CD4-positive, alpha-beta T cell (primary cell): ENCODE measurements at regions of chr12 and their contacts with region 1.

Region 1: DNA sequence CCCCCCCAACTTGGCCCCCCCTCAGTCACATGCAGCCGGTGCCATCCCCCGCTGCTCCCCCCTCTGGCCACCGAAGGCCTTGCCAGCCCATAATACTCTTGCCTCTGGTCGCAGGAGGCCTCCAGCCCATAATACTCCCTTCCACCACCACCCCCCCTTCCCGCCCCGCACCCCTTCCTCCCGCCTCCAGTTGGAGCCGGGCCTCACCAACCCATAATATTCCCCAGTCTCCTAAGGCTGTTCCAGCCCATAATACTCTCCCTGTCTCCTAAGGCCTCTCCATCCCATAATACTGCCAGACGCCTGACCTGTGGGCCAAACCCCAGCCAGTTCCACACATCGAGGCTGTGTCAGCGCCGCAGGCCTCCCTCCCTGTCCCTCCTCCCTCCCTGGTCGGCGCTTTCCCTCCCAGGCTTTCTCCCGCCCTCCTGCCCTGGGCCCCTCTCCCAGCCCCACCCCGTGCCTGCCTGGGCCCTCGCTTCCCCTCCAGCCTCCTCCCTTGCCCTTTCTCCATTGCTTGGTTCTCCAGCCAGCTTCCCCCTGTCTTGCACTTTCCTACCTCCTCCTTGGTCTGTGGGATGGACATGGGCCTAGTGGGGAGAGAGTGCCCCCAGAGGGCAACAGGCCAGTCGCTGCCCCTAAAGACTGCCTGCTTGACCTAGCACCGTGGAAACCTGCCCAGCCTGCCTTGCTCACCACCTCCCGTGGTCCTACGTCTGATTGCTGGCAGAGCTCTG is 6.8 kb upstream of the CHD4 start:
- DNase-seq: peak in 9 of 14 experiments; percentile 16 to 84 (median 46)
- ATAC-seq: peak; percentile 36
- H3K4me3 ChIP-seq: no peak overlapping the region
- H3K4me3 Mint-ChIP-seq: peak overlapping the region; percentile 31
- H3K27ac ChIP-seq: peak overlapping the region; percentile 40 to 47
- H3K27ac Mint-ChIP-seq: peak overlapping the region; percentile 84
- H3K4me1 ChIP-seq: peaks cover 43% of the 10 kb centered on the region
- H3K4me1 Mint-ChIP-seq: peaks cover 47% of the 10 kb centered on the region
- H3K27me3 ChIP-seq: no peaks in the 10 kb centered on the region
- H3K27me3 Mint-ChIP-seq: no peaks in the 10 kb centered on the region
- CTCF ChIP-seq: no peak

Region 2: DNA sequence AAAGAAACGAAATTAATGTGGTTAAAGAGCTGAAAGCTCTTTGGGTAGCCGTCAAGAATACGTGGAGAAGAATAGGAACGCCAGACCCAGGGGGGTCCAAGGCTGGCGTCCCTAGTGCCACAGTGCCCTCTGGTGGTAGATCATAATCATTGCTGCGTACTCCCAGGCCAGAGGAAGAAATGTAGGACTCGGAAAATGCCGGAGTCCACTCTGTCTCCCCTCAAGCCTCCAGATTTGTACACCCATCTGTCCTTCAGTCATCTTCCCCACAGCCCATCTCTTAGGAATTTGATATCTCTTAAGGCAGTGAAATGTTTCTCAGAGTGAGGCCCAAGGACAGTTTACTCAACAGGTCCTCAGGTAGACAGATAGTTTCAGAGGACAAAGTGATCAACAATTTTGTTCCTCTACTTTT is 328.9 kb before region 1 on chr12:
- CTCF ChIA-PET with region 1: no interaction called
- POLR2A ChIA-PET with region 1: no interaction called
- intact Hi-C with region 1: no loop called
- DNase-seq: peak; percentile 28 to 85 (median 48)
- ATAC-seq: peak; percentile 90
- H3K4me3 ChIP-seq: no peak overlapping the region
- H3K4me3 Mint-ChIP-seq: no peak overlapping the region
- H3K27ac ChIP-seq: no peak overlapping the region
- H3K27ac Mint-ChIP-seq: no peak overlapping the region
- H3K4me1 ChIP-seq: peaks cover 4% of the 10 kb centered on the region
- H3K4me1 Mint-ChIP-seq: peaks cover 5% of the 10 kb centered on the region
- H3K27me3 ChIP-seq: no peaks in the 10 kb centered on the region
- H3K27me3 Mint-ChIP-seq: peaks cover 14% of the 10 kb centered on the region
- CTCF ChIP-seq: peak; percentile 97

Region 3: DNA sequence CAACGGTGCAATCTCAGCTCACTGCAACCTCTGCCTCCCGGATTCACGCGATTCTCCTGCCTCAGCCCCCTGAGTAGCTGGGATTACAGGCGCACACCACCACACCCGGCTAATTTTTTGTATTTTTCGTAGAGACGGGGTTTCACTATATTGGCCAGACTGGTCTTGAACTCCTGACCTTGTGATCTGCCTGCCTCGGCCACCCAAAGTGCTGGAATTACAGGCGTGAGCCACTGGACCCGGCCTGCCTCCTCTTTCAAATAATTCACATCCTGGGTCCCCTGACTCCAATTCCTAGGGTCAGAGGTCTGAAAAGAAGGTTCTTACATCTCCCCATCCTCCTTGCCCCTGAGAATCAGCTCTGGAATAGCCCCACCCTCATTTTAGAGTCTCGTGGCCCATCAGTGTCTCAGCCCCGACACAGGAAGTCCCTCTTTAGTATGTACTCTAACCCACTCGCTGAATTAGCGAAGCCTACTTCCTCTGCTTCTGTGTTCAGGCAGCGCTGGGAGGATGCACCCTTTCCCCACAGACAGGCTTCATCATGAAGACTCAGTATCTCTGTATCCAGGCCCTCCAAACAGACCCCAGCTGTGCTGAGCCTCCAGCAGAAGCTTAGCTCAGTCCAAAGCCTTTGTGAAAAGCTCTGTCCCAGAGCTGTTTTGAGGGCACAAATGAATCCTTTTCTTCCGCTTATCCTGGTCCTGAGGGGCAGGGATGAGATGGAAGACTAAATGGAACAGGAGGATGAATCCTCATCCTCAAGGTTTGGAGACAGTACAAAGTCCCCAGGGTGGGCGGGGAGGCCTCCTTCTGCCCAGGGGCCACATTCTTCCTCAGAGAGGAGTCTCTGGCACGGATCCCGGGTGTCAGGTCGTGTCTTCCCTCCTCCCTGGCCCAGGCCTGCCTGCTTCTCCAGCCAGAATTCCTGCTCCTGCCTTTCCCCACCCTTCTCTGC is 18.4 kb after region 1 on chr12:
- CTCF ChIA-PET with region 1: interaction called, 3 read pairs
- POLR2A ChIA-PET with region 1: interaction called, 12 read pairs
- intact Hi-C with region 1: loop called in 1 of 2 experiments (anchors 2 kb)
- DNase-seq: peak in 13 of 14 experiments; percentile 29 to 84 (median 47)
- ATAC-seq: peak; percentile 81
- H3K4me3 ChIP-seq: peak overlapping the region; percentile 51
- H3K4me3 Mint-ChIP-seq: peak overlapping the region; percentile 78
- H3K27ac ChIP-seq: peak overlapping the region; percentile 66 to 67
- H3K27ac Mint-ChIP-seq: peak overlapping the region; percentile 91
- H3K4me1 ChIP-seq: peaks cover 70% of the 10 kb centered on the region
- H3K4me1 Mint-ChIP-seq: peaks cover 63% of the 10 kb centered on the region
- H3K27me3 ChIP-seq: no peaks in the 10 kb centered on the region
- H3K27me3 Mint-ChIP-seq: no peaks in the 10 kb centered on the region
- CTCF ChIP-seq: no peak

Region 4: DNA sequence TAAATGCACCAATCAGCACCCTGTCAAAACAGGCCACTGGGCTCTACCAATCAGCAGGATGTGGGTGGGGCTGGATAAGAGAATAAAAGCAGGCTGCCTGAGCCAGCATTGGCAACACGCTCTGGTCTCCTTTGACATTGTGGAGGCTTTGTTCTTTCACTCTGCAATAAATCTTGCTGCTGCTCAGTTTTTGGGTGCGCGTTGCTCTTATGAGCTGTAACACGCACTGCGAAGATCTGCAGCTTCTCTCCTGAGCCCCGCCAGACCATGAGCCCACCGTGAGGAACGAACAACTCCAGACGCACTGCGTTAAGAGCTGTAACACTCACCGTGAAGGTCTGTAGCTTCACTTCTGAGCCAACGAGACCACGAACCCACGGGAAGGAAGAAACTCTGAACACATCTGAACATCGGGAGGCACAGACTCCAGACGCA is 95.0 kb after region 1 on chr12:
- CTCF ChIA-PET with region 1: no interaction called
- POLR2A ChIA-PET with region 1: no interaction called
- intact Hi-C with region 1: no loop called
- DNase-seq: peak in 4 of 14 experiments; percentile 16 to 67 (median 39)
- ATAC-seq: peak; percentile 84
- H3K4me3 ChIP-seq: peak overlapping the region; percentile 36
- H3K4me3 Mint-ChIP-seq: peak overlapping the region; percentile 87
- H3K27ac ChIP-seq: peak overlapping the region in 1 of 2 donors; percentile 52
- H3K27ac Mint-ChIP-seq: peak overlapping the region; percentile 79
- H3K4me1 ChIP-seq: peaks cover 11% of the 10 kb centered on the region
- H3K4me1 Mint-ChIP-seq: peaks cover 9% of the 10 kb centered on the region
- H3K27me3 ChIP-seq: peaks cover 5 to 7% of the 10 kb centered on the region in 2 experiments
- H3K27me3 Mint-ChIP-seq: peaks cover 25% of the 10 kb centered on the region
- CTCF ChIP-seq: no peak